ENCODE measurements at regions of chr19 and their contacts with region 1.

Region 1: DNA sequence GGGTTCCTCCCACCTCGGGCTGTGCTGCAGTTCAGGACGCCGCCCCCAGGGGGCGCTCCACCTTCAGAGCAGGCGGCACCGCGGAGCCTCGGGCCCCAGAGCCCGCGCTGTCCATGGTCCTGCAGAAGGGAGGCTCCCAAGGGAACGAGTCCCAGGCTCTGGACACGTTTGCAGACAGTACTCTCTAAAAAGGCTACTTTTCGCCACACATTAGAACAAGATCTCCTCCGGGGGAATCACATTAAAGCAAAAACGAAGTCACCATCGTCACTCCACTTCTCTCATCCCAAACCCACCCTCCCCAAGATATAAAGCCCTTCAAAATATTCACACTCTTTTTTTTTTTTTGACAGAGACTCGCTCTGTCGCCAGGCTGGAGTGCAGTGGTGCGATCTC is 4.6 kb upstream of the SIGLEC10 start:
- DNase-seq: peak; percentile 90
- ATAC-seq: peak; percentile 83
- H3K4me3 Mint-ChIP-seq: no peak overlapping the region
- H3K27ac Mint-ChIP-seq: no peak overlapping the region
- H3K4me1 Mint-ChIP-seq: peaks cover 17% of the 10 kb centered on the region
- H3K27me3 Mint-ChIP-seq: peaks cover 18% of the 10 kb centered on the region

Region 2: GRCh38 chr19:51402117-51402516 is 19.9 kb before region 1 on chr19:
- CTCF ChIA-PET with region 1: interaction called, 18 read pairs
- DNase-seq: no peak
- ATAC-seq: no peak
- H3K4me3 Mint-ChIP-seq: no peak overlapping the region
- H3K27ac Mint-ChIP-seq: no peak overlapping the region
- H3K4me1 Mint-ChIP-seq: peaks cover 8% of the 10 kb centered on the region
- H3K27me3 Mint-ChIP-seq: no peaks in the 10 kb centered on the region

Region 3: GRCh38 chr19:51441410-51442390 is 19.6 kb after region 1 on chr19:
- CTCF ChIA-PET with region 1: interaction called, 108 read pairs
- DNase-seq: peak; percentile 99
- ATAC-seq: peak; percentile 91
- H3K4me3 Mint-ChIP-seq: peak overlapping the region; percentile 68
- H3K27ac Mint-ChIP-seq: peak overlapping the region; percentile 82
- H3K4me1 Mint-ChIP-seq: peaks cover 39% of the 10 kb centered on the region
- H3K27me3 Mint-ChIP-seq: peaks cover 31% of the 10 kb centered on the region

Region 4: DNA sequence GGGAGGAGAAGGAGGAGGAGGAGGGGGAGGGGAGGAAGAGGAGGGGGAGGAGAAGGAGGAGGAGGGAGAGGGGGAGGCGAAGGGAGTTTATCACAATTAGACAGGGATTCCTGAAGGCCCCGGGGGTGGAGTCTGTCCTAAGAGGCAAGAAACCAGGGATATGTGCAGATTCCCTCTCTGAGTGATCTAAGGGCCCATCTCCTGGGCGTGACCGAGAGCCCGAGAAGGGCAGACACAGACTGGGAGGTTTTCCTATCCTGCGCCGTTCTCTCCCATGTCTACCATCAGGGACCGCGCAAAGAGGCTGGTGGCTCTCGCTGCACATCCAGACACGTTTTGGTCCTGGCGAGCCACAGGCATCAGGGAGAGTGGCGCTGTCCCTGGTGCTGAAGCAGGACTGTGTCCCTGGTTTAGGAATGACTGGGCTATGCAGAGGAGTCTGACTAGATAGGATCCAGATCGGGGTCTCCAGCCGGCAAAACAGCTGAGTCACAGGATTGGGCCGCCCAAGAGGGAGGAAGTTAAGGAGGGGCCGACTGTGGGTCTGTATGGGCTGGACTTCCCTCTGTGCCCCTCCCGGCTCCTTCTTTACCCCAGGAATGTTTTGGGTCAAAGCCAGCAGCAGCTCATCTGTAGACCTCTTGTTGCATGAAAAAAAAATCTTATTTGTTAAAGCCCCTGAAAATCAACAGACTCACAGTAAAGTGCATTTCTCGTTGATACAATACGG is 131.1 kb after region 1 on chr19:
- CTCF ChIA-PET with region 1: no interaction called
- DNase-seq: peak; percentile 67
- ATAC-seq: peak; percentile 39
- H3K4me3 Mint-ChIP-seq: no peak overlapping the region
- H3K27ac Mint-ChIP-seq: no peak overlapping the region
- H3K4me1 Mint-ChIP-seq: peaks cover 34% of the 10 kb centered on the region
- H3K27me3 Mint-ChIP-seq: peaks cover 41% of the 10 kb centered on the region

Measured in activated CD8-positive, alpha-beta memory T cell treated with anti-CD3 and anti-CD28 coated beads, Interleukin-2, amount 10 ng/mL, durations not matched to agents 7 days and 5 days (primary cell).